Endothelial cell of umbilical vein (primary cell): ENCODE measurements at regions of chr14 and their contacts with region 1.

Region 1: DNA sequence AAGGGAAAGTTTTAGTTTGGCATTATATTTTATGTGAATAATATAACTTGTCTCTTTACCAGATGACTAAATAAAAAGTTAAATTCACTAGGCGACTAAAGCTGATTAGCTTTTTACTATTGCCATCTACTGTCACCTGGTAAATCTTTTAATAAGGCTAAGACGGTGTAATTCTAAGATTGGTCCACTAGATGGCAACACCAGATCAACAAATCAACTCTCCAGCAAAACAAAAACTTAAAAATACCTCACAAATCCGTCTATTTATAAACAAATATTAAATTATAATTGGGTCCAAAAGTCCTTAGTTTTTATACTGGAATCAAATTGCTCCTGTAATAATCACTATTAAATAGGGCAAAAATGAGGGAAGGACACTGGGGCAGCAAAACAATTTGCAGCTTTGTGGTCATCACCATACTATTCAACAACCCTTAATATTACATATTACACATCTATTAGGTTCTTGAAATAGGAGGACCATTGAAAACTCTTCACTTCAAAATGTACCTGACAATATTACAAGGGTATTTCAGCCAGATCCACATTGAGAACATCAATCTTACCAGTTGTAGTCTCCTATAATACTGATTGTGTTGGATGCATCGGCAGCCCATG is 47.9 kb downstream of the GALC start:
- DNase-seq: peak; percentile 64
- H3K4me3 ChIP-seq: no peak overlapping the region
- H3K27ac ChIP-seq: no peak overlapping the region
- H3K4me1 ChIP-seq: no peaks in the 10 kb centered on the region
- H3K27me3 ChIP-seq: no peaks in the 10 kb centered on the region
- CTCF ChIP-seq: peak; percentile 19 to 43
- POLR2A ChIP-seq: no peak

Region 2: DNA sequence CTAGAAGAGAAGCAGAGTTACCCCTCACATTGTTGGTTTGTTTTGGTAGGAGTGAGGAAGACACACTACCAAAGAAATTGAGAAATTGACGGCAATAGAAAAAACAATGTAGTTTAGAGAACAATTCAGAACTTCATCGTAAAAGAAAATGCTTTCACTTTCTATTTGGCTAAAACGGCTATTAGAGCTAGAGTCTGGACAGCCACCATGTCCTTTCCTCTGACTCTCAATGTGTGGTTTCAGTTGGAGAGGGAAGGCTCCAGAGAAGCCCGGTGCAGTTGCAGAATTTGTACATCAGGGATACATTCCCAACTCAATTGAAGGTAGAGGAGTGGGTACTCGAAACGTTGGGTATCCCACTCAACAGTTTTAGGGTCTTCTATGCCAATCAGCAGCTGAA is 487.4 kb before region 1 on chr14:
- CTCF ChIA-PET with region 1: no interaction called
- POLR2A ChIA-PET with region 1: no interaction called
- dilution Hi-C with region 1: no loop called
- intact Hi-C with region 1: no loop called
- DNase-seq: no peak
- H3K4me3 ChIP-seq: no peak overlapping the region
- H3K27ac ChIP-seq: no peak overlapping the region
- H3K4me1 ChIP-seq: no peaks in the 10 kb centered on the region
- H3K27me3 ChIP-seq: no peaks in the 10 kb centered on the region
- CTCF ChIP-seq: no peak
- POLR2A ChIP-seq: no peak

Region 3: GRCh38 chr14:87934185-87934584 is 10.9 kb before region 1 on chr14:
- CTCF ChIA-PET with region 1: interaction called, 16 read pairs
- POLR2A ChIA-PET with region 1: no interaction called
- dilution Hi-C with region 1: no loop called
- intact Hi-C with region 1: no loop called
- DNase-seq: no peak
- H3K4me3 ChIP-seq: no peak overlapping the region
- H3K27ac ChIP-seq: no peak overlapping the region
- H3K4me1 ChIP-seq: no peaks in the 10 kb centered on the region
- H3K27me3 ChIP-seq: no peaks in the 10 kb centered on the region
- CTCF ChIP-seq: no peak
- POLR2A ChIP-seq: no peak

Region 4: DNA sequence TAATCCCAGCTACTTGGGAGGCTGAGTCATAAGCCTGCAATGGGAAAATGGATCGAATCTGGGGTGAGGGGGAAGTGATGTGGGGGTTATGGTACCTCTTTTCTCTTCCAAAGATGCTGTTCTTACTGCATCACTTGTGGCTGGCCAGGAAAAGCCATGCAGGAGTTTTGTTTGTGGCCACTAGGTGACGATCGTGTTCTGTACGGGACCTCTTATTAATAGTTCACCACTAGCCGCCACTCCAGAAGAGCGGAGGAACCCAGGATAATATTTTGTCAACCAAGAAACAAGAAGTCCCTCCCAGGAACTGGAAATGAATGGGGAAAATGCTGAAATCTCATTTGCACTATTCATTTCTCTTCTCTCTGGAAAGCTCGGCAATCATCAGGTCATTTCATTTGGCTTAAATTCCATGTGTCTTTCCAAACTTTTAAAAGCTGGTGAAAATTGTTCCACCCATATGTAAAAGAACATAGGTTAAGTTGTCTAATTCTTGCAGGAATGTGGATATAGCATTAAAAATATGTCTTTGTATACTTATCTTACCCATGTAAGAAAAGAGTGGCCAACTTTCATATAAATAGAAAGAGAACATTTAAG is 68.8 kb after region 1 on chr14:
- CTCF ChIA-PET with region 1: interaction called, 27 read pairs
- POLR2A ChIA-PET with region 1: no interaction called
- dilution Hi-C with region 1: no loop called
- intact Hi-C with region 1: loop called (anchors 1 kb)
- DNase-seq: peak; percentile 51
- H3K4me3 ChIP-seq: no peak overlapping the region
- H3K27ac ChIP-seq: no peak overlapping the region
- H3K4me1 ChIP-seq: peaks cover 3% of the 10 kb centered on the region
- H3K27me3 ChIP-seq: peaks cover 0 to 1% of the 10 kb centered on the region in 2 experiments
- CTCF ChIP-seq: peak; percentile 76 to 88
- POLR2A ChIP-seq: no peak

Region 5: GRCh38 chr14:88189417-88190191 is 244.5 kb after region 1 on chr14:
- CTCF ChIA-PET with region 1: interaction called, 9 read pairs
- POLR2A ChIA-PET with region 1: no interaction called
- dilution Hi-C with region 1: no loop called
- intact Hi-C with region 1: loop called (anchors 1 kb)
- DNase-seq: peak; percentile 75
- H3K4me3 ChIP-seq: no peak overlapping the region
- H3K27ac ChIP-seq: no peak overlapping the region
- H3K4me1 ChIP-seq: no peaks in the 10 kb centered on the region
- H3K27me3 ChIP-seq: no peaks in the 10 kb centered on the region
- CTCF ChIP-seq: peak; percentile 47 to 58
- POLR2A ChIP-seq: no peak

Region 6: GRCh38 chr14:88380405-88380804 is 435.3 kb after region 1 on chr14:
- CTCF ChIA-PET with region 1: interaction called, 17 read pairs
- POLR2A ChIA-PET with region 1: no interaction called
- dilution Hi-C with region 1: no loop called
- intact Hi-C with region 1: loop called (anchors 2 kb)
- DNase-seq: no peak
- H3K4me3 ChIP-seq: no peak overlapping the region
- H3K27ac ChIP-seq: no peak overlapping the region
- H3K4me1 ChIP-seq: peaks cover 3% of the 10 kb centered on the region
- H3K27me3 ChIP-seq: peaks cover 11 to 22% of the 10 kb centered on the region in 2 experiments
- CTCF ChIP-seq: peak in 1 of 2 donors; percentile 1
- POLR2A ChIP-seq: no peak

Region 7: DNA sequence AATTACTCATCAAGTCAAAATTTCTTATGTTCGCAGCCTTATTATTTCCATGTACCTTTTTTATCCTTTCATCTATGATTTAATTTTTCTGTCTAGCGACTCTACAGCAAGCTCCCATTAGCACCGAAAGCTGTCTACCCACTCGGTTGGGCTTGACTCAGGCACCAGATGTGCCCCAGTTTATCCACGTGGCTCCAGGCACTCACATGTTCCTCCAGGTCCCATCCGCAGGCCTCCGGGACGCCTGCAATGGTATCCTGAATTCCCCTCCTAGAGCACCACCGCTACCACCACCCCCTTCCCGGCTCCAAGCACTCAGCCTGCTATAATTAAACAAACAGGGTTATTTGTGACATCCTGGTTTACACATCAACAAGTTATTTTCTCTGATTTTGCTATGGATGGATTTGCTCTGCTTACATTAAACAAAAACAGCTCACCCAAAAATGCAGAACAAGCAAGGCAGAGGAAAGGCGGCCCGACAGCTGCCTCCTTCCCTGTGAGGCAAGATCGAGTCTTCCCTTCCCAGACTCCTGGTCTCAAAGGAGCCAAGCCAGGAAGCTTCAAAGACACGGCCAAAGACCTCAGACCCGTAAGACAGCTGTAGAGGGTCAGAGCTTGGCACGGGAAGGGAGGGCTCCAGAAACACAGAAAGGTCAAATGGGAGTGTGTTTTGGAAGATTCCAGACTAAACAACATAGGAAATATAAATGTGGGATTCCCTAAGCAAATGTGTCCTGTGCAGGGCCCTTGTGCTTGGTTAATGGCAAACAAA is 1133.1 kb after region 1 on chr14:
- CTCF ChIA-PET with region 1: no interaction called
- POLR2A ChIA-PET with region 1: no interaction called
- dilution Hi-C with region 1: no loop called
- intact Hi-C with region 1: no loop called
- DNase-seq: no peak
- H3K4me3 ChIP-seq: no peak overlapping the region
- H3K27ac ChIP-seq: no peak overlapping the region
- H3K4me1 ChIP-seq: no peaks in the 10 kb centered on the region
- H3K27me3 ChIP-seq: peaks cover 2% of the 10 kb centered on the region in 2 experiments
- CTCF ChIP-seq: no peak
- POLR2A ChIP-seq: no peak